ENCODE measurements at regions of chr16 and their contacts with region 1.

Region 1: DNA sequence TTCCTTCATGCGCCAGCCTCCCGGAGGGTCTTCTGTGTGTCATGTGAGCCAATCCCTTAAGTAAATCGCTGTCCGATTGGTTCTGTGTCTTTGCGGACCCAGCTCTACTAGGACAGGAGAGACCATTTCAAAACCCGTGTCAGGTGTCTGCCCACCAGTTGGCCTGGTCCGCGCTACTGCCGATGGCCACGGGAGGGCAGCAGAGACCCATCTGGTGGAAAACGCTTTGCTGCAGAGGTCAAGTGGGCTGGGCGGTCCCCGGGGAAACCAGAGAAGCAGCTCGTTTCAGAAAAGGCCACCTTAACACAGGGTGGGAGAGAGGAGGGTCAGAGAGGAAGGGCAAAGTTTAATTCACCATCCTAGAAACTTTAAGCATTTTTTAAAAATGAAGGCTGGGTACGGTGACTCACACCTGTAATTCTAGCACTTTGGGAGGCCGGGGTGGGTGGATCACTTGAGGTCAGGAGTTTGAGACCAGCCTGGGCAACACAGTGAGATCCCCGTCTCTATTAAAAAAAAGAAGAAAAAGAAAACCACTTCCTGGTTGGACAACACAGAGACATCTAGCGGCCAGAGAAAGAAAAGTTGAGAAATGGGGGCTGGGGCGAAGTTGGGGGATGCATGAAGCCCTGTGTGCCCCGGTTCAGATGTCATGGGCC is 2.8 kb upstream of the CIBAR2 start:
- DNase-seq: no peak
- H3K4me3 ChIP-seq: no peak overlapping the region
- CTCF ChIP-seq: peak; percentile 99

Region 2: GRCh38 chr16:84884596-84885341 is 230.3 kb before region 1 on chr16:
- CTCF ChIA-PET with region 1: no interaction called
- POLR2A ChIA-PET with region 1: no interaction called
- DNase-seq: no peak
- H3K4me3 ChIP-seq: no peak overlapping the region
- CTCF ChIP-seq: no peak

Region 3: GRCh38 chr16:85126705-85127419 is 11.8 kb after region 1 on chr16:
- CTCF ChIA-PET with region 1: interaction called, 63 read pairs
- POLR2A ChIA-PET with region 1: no interaction called
- DNase-seq: no peak
- H3K4me3 ChIP-seq: no peak overlapping the region
- CTCF ChIP-seq: peak; percentile 3

Region 4: DNA sequence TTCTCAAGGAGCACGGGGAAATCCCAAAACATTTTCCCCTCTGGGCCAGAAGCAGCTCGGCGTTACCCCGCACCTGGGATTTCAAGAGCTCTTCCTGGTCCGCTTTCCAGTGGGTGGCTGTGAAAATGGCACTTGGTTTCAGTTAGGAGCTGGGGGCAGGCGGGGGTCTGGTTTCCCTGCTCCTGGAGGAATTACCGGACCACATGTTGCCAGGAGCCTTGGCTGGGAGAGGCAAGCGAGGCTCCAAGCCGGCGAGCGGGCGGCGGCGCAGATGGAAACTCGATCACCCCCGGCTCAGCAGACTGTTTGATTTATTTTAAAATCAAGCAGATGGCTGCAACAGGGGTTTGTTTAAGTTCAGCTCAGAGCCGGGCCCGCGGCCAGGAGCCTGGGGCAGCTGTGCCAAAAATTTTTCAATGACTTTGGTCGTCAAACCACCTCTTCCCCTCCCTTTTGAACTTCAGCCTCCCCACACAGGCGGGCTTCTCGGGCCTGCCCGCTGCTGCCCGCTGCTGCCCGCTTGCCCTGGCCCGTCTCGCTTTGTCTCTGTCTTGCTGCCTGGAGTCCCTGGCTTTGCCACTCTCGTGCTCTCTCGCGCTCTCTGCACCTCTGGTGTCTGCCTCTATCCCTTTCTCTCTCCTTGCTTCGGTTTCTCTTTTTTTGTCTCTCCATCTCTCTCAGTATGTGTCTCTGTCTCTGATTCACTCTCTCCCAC is 105.2 kb after region 1 on chr16:
- CTCF ChIA-PET with region 1: interaction called, 12 read pairs
- POLR2A ChIA-PET with region 1: no interaction called
- DNase-seq: no peak
- H3K4me3 ChIP-seq: peak overlapping the region; percentile 42
- CTCF ChIP-seq: peak; percentile 3

Region 5: GRCh38 chr16:85245307-85246172 is 130.5 kb after region 1 on chr16:
- CTCF ChIA-PET with region 1: interaction called, 52 read pairs
- POLR2A ChIA-PET with region 1: no interaction called
- DNase-seq: no peak
- H3K4me3 ChIP-seq: no peak overlapping the region
- CTCF ChIP-seq: peak; percentile 89

Region 6: DNA sequence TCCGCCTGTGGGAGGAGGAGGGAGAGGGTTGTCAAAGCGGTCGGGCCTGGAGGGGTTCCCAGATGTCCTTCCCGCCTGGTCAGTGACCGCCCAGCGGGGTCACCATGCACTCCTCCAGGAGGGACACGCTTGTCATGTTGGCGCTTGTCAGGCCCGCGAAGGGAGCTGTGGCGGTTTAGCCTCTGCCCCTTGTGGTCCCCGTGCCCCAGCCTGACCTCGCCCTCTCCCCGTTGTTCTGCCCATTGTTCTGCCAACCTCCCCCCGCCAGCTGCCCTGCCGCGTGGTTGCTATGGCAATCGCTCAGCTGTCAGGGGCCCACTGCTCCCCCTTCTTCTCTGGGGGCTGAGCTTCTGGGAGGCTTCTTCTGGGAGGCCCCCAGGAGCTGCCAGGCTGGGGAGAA is 143.6 kb after region 1 on chr16:
- CTCF ChIA-PET with region 1: interaction called, 52 read pairs
- POLR2A ChIA-PET with region 1: no interaction called
- DNase-seq: no peak
- H3K4me3 ChIP-seq: no peak overlapping the region
- CTCF ChIP-seq: no peak

Region 7: DNA sequence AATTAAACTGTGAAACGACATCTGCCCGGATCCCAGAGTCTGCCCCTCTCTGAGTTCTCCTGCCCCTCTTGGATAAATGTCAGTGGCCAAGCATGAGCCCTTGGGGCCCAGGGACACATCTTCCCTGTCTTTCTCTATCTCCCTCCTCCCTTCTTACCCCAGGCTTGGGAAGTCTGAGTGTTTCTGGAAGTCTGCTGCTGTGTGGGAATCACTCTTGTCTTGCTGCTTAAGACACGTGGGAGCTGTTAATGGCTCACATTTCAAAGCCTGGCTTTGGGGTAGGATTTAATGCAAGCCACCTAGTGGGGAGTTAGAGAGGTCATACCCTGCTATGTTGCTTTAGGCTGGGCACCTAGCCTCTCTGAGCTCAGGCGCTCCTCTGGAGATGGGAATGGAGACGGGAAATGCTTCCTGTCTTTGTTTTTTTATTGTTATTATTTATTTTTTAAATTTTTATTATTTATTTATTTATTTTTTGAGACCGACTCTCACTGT is 215.7 kb after region 1 on chr16:
- CTCF ChIA-PET with region 1: interaction called, 19 read pairs
- POLR2A ChIA-PET with region 1: no interaction called
- DNase-seq: peak; percentile 52
- H3K4me3 ChIP-seq: no peak overlapping the region
- CTCF ChIP-seq: peak; percentile 63

Region 8: DNA sequence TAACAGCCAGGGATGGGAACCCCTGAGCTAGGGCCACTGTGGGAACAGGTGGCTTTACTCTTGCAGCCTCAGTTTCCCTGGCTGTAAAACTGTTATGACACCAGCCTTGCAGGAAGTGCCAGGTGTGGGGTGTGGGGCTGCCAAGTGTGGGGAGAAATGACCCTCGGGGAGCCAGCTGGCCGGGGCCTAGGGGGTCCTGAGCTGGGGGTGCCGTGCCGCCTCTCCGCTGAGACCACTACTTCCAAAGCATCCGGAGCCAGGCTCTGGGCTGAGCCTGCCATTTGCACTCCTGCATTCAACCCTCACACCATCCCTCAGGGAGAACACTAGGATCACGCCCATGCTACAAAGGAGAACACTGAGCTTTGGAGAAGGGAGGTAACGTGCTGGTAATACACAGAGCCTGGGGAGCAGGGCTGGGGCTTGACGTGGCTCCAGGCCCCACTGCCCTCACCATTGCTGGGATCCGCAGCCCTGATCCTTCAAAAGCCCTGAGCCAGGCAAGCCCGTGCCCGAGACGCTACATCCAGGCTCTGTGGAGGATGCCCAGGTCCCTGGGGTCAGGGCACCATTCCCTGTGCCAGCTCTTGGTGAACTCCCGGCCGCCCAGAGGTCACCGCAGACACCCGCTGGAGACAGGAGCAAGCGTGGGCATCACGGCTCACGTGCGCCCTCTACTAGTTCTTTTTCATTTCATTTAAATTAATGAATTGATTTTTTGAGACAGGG is 602.5 kb after region 1 on chr16:
- CTCF ChIA-PET with region 1: interaction called, 11 read pairs
- POLR2A ChIA-PET with region 1: no interaction called
- DNase-seq: no peak
- H3K4me3 ChIP-seq: no peak overlapping the region
- CTCF ChIP-seq: peak; percentile 48

Measured in AG04449 (cell line).